Naive thymus-derived CD4-positive, alpha-beta T cell (primary cell): ENCODE measurements at regions of chr9 and their contacts with region 1.

Region 1: DNA sequence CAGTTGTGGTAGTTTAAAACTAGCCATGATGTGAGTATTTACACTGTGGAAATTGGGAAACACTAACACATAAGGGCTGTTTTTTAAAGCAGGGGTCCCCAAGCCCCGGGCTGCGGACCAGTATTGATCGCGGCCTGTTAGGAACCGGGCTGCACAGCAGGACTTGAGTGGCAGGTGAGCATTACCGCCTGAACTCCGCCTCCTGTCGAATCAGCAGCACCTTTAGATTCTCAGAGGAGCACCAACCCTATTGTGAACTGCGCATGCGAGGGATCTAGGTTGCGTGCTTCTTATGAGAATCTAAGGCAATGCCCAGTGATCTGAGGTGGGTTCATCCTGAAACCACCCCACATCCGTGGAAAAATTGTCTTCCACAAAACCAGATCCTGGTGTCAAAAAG is 127.8 kb downstream of the PCSK5 start:
- DNase-seq: peak in 5 of 9 donors; percentile 16 to 45 (median 22)
- ATAC-seq: peak; percentile 37
- H3K4me3 ChIP-seq: no peak overlapping the region
- H3K4me3 Mint-ChIP-seq: peak overlapping the region; percentile 51 to 79 (median 67)
- H3K27ac ChIP-seq: peak overlapping the region; percentile 57
- H3K27ac Mint-ChIP-seq: peak overlapping the region; percentile 47 to 99 (median 89)
- H3K4me1 ChIP-seq: peaks cover 0 to 64% of the 10 kb centered on the region in 2 donors
- H3K4me1 Mint-ChIP-seq: peaks cover 44 to 100% (median 95%) of the 10 kb centered on the region in 7 donors
- H3K27me3 ChIP-seq: no peaks in the 10 kb centered on the region
- H3K27me3 Mint-ChIP-seq: no peaks in the 10 kb centered on the region

Region 2: GRCh38 chr9:76004526-76004925 is 13.7 kb before region 1 on chr9:
- CTCF ChIA-PET with region 1: no interaction called
- POLR2A ChIA-PET with region 1: interaction called, 4 read pairs
- intact Hi-C with region 1: loop called in 1 of 2 experiments (anchors 1 kb)
- DNase-seq: no peak
- ATAC-seq: no peak
- H3K4me3 ChIP-seq: no peak overlapping the region
- H3K4me3 Mint-ChIP-seq: peak overlapping the region in 4 of 10 donors; percentile 29 to 62 (median 38)
- H3K27ac ChIP-seq: no peak overlapping the region
- H3K27ac Mint-ChIP-seq: peak overlapping the region in 4 of 9 donors; percentile 15 to 54 (median 22)
- H3K4me1 ChIP-seq: peaks cover 0 to 25% of the 10 kb centered on the region in 2 donors
- H3K4me1 Mint-ChIP-seq: peaks cover 20 to 94% (median 80%) of the 10 kb centered on the region in 7 donors
- H3K27me3 ChIP-seq: no peaks in the 10 kb centered on the region
- H3K27me3 Mint-ChIP-seq: no peaks in the 10 kb centered on the region

Region 3: GRCh38 chr9:76045221-76045620 is 27.0 kb after region 1 on chr9:
- CTCF ChIA-PET with region 1: no interaction called
- POLR2A ChIA-PET with region 1: no interaction called
- intact Hi-C with region 1: no loop called
- DNase-seq: no peak
- ATAC-seq: no peak
- H3K4me3 ChIP-seq: no peak overlapping the region
- H3K4me3 Mint-ChIP-seq: no peak overlapping the region
- H3K27ac ChIP-seq: no peak overlapping the region
- H3K27ac Mint-ChIP-seq: no peak overlapping the region
- H3K4me1 ChIP-seq: no peaks in the 10 kb centered on the region
- H3K4me1 Mint-ChIP-seq: peaks cover 0 to 28% (median 10%) of the 10 kb centered on the region in 7 donors
- H3K27me3 ChIP-seq: no peaks in the 10 kb centered on the region
- H3K27me3 Mint-ChIP-seq: no peaks in the 10 kb centered on the region